H1 (cell line): ENCODE measurements at regions of chr19 and their contacts with region 1.

Region 1: DNA sequence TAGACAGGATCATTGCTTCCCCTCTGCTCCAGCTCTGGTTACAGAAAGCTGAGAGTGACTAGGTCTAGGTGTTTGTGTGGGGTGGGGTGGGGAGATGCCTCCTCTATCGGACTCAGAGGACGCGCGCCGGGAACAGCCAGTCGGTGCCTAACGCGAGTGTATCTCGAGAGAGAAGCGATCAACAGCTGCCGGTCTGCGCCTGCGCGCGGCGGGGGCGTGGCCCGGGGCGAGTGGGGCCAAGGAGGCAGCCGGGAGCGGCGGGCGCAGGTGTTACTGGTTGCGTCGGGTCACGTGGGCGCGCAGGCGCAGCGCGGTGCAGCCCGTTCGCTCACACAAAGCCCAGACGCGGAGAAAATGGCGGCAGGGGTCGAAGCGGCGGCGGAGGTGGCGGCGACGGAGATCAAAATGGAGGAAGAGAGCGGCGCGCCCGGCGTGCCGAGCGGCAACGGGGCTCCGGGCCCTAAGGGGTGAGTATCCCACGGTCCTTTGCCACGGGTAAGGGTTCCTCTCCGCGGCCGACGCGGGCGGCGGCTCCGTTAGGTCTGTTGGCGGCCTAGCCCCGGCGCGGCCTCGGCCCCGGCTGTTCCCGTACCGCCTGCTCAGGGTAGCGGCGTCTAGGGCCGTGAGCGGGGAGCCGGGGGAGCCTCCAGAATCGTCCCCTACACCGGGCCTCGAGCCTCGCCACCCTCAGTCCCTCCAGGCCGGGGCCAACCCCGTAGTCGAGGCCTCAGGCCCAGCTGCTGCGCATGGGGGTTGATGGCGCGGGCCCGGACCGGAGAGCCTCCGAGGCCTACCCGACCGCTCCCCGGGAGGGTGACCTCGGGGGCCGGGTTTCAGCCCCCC is at the start of gene HNRNPM:
- DNase-seq: peak; percentile 87 to 100
- H3K4me3 ChIP-seq: peak within 1 kb of the TSS; percentile 85 to 93 (median 88)
- H3K27ac ChIP-seq: peak within 1 kb of the TSS; percentile 98
- H3K4me1 ChIP-seq: peaks cover 7 to 26% (median 17%) of the 10 kb centered on the region in 4 experiments
- H3K27me3 ChIP-seq: no peaks in the 10 kb centered on the region
- CTCF ChIP-seq: no peak
- EP300 ChIP-seq: no peak
- POLR2A ChIP-seq: peak; percentile 91 to 97
- RAD21 ChIP-seq: no peak
- total RNA-seq, gene HNRNPM: 448 and 474 TPM in 2 replicates

Region 2: GRCh38 chr19:8334458-8335342 is 110.2 kb before region 1 on chr19:
- CTCF ChIA-PET with region 1: no interaction called
- POLR2A ChIA-PET with region 1: no interaction called
- DNase-seq: peak in 1 of 2 experiments; percentile 83
- H3K4me3 ChIP-seq: peak overlapping the region; percentile 38 to 56 (median 43)
- H3K27ac ChIP-seq: no peak overlapping the region
- H3K4me1 ChIP-seq: peaks cover 0 to 18% (median 10%) of the 10 kb centered on the region in 4 experiments; a peak in 6 of 7 replicates
- H3K27me3 ChIP-seq: peaks cover 21 to 38% (median 33%) of the 10 kb centered on the region in 4 experiments
- CTCF ChIP-seq: no peak
- EP300 ChIP-seq: no peak
- POLR2A ChIP-seq: no peak
- RAD21 ChIP-seq: no peak

Region 3: GRCh38 chr19:8412783-8413628 is 31.9 kb before region 1 on chr19 and contains the start of gene MARCHF2:
- CTCF ChIA-PET with region 1: interaction called, 19 read pairs
- POLR2A ChIA-PET with region 1: interaction called, 19 read pairs
- DNase-seq: peak; percentile 96
- H3K4me3 ChIP-seq: peak within 1 kb of the TSS; percentile 65 to 83 (median 68)
- H3K27ac ChIP-seq: no peak within 1 kb of the TSS
- H3K4me1 ChIP-seq: peaks cover 0 to 3% (median under 1%) of the 10 kb centered on the region in 4 experiments; a peak in 3 of 7 replicates
- H3K27me3 ChIP-seq: no peaks in the 10 kb centered on the region
- CTCF ChIP-seq: peak; percentile 38 to 62 (median 43)
- EP300 ChIP-seq: no peak
- POLR2A ChIP-seq: no peak
- RAD21 ChIP-seq: peak in 1 of 2 experiments; percentile 52; a peak in 2 of 4 replicates
- total RNA-seq, gene MARCHF2: 18.5 and 19.7 TPM in 2 replicates

Region 4: GRCh38 chr19:8459520-8460259 is 14.8 kb after region 1 on chr19:
- CTCF ChIA-PET with region 1: interaction called, 5 read pairs
- POLR2A ChIA-PET with region 1: interaction called, 63 read pairs
- DNase-seq: no peak
- H3K4me3 ChIP-seq: no peak overlapping the region
- H3K27ac ChIP-seq: no peak overlapping the region
- H3K4me1 ChIP-seq: peaks cover 8 to 14% (median 12%) of the 10 kb centered on the region in 4 experiments
- H3K27me3 ChIP-seq: no peaks in the 10 kb centered on the region
- CTCF ChIP-seq: no peak
- EP300 ChIP-seq: no peak
- POLR2A ChIP-seq: no peak
- RAD21 ChIP-seq: no peak

Region 5: DNA sequence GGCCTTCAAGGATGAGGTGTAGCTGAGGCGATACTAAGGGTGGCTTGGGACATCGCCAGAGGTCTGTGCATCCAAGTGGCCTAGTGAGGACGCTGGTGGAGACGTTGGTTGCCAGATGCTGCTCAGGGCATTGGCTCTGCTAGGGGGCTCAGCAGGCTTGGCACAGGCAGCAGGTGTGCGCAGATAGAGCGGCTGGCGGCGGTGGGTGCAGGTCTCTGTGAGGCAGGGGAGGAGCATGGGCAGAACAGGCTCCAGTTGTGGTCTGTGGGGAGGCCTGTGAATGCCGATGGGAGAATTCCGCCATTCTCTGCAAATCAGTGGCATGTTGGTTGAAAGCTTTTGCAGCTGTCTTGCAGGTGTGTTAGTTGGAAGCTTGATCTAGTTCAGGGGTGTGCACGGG is 36.3 kb after region 1 on chr19:
- CTCF ChIA-PET with region 1: interaction called, 3 read pairs
- POLR2A ChIA-PET with region 1: interaction called, 54 read pairs
- DNase-seq: no peak
- H3K4me3 ChIP-seq: no peak overlapping the region
- H3K27ac ChIP-seq: peak overlapping the region; percentile 60; the same call in 1 of the 2 replicates
- H3K4me1 ChIP-seq: no peaks in the 10 kb centered on the region; a peak in 1 of 7 replicates
- H3K27me3 ChIP-seq: no peaks in the 10 kb centered on the region
- CTCF ChIP-seq: no peak
- EP300 ChIP-seq: no peak
- POLR2A ChIP-seq: no peak
- RAD21 ChIP-seq: no peak